ENCODE measurements at regions of chr11 and their contacts with region 1.

Region 1: DNA sequence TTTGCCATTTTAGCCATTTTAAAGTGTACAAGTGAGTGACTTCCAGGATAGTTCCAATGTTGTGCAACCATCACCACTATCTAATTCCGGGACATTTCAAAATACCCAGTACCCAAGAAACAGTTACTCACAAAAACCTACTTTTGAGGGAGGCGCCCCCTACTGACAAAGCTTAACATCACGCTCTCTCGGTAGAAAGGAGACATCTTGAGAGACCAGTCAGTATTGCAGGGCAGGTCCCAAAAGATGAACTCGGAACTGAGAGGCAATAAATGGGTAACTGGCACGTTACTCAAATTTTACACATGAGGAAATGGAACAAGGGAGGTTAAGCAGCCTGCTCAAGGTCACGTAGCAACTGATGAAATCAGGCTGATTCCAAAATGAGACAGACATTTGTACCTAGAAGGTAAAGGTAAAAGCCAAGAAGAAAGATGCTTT is 50.0 kb upstream of the POU2AF1 start:
- DNase-seq: peak; percentile 29 to 68 (median 56)
- ATAC-seq: peak; percentile 91
- H3K4me3 ChIP-seq: no peak overlapping the region
- H3K27ac ChIP-seq: no peak overlapping the region
- H3K4me1 ChIP-seq: no peaks in the 10 kb centered on the region
- H3K27me3 ChIP-seq: peaks cover 2 to 9% of the 10 kb centered on the region in 2 experiments; a peak in 2 of 5 replicates
- CTCF ChIP-seq: peak; percentile 80 to 99 (median 95)
- EP300 ChIP-seq: no peak
- POLR2A ChIP-seq: no peak
- RAD21 ChIP-seq: peak; percentile 30 to 63; a peak in 3 of 4 replicates

Region 2: DNA sequence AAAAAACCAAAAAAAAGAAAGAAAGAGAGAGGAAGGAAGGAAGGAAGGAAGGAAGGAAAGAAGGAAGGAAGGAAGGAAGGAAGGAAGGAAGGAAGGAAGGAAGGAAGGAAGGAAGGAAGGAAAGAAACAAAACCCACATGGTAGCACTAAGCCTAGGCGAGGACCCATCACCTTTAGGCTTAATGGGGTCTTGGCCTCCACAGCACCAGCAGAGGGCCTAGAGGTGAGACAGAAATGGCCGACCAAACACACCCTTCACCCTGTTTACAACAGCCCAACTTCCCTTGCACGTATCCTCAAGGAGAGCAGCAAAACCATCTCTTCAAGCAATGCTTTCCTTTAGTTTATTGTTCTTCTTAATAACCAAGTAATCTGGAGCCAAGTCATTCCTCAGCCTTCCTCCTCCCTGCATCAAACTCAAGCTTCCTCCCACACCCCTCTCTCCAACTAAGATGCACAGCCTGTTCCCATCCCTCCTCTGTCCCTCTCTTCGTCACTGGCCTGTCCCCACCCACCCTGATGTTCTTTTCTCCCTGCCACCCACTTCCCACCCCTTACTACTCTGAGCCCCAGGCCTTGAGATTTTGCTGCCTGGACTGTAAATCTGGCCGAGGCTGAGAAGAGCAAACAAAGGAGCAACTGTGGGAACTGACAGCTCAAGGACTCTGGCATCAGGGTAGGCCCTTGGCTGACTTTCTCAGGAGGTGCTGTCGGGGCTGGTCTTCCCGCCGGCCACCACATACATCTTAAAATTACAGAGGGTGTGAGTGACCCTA is 76.0 kb before region 1 on chr11:
- CTCF ChIA-PET with region 1: no interaction called
- POLR2A ChIA-PET with region 1: no interaction called
- in situ Hi-C with region 1: no loop called
- intact Hi-C with region 1: loop called (anchors 5 kb)
- DNase-seq: no peak
- ATAC-seq: no peak
- H3K4me3 ChIP-seq: no peak overlapping the region
- H3K27ac ChIP-seq: no peak overlapping the region
- H3K4me1 ChIP-seq: no peaks in the 10 kb centered on the region
- H3K27me3 ChIP-seq: no peaks in the 10 kb centered on the region; a peak in 1 of 5 replicates
- CTCF ChIP-seq: no peak
- EP300 ChIP-seq: no peak
- POLR2A ChIP-seq: no peak
- RAD21 ChIP-seq: no peak